Activated CD4-positive, alpha-beta memory T cell treated with anti-CD3 and anti-CD28 coated beads, Interleukin-2, amount 10 ng/mL, durations not matched to agents 7 days and 5 days (primary cell): ENCODE measurements at regions of chr11 and their contacts with region 1.

Region 1: GRCh38 chr11:2002807-2003206 is 5.2 kb upstream of the H19 start:
- DNase-seq: no peak
- H3K4me3 Mint-ChIP-seq: no peak overlapping the region
- H3K27ac Mint-ChIP-seq: no peak overlapping the region
- H3K4me1 Mint-ChIP-seq: no peaks in the 10 kb centered on the region
- H3K27me3 Mint-ChIP-seq: no peaks in the 10 kb centered on the region

Region 2: GRCh38 chr11:1652771-1653540 is 349.9 kb before region 1 on chr11:
- CTCF ChIA-PET with region 1: interaction called, 24 read pairs
- POLR2A ChIA-PET with region 1: no interaction called
- DNase-seq: peak; percentile 77
- H3K4me3 Mint-ChIP-seq: no peak overlapping the region
- H3K27ac Mint-ChIP-seq: no peak overlapping the region
- H3K4me1 Mint-ChIP-seq: no peaks in the 10 kb centered on the region
- H3K27me3 Mint-ChIP-seq: peaks cover 13% of the 10 kb centered on the region

Region 3: GRCh38 chr11:1832211-1832919 is 170.4 kb before region 1 on chr11:
- CTCF ChIA-PET with region 1: interaction called, 34 read pairs
- POLR2A ChIA-PET with region 1: interaction called, 3 read pairs
- DNase-seq: peak; percentile 65
- H3K4me3 Mint-ChIP-seq: no peak overlapping the region
- H3K27ac Mint-ChIP-seq: no peak overlapping the region
- H3K4me1 Mint-ChIP-seq: no peaks in the 10 kb centered on the region
- H3K27me3 Mint-ChIP-seq: peaks cover 5% of the 10 kb centered on the region

Region 4: DNA sequence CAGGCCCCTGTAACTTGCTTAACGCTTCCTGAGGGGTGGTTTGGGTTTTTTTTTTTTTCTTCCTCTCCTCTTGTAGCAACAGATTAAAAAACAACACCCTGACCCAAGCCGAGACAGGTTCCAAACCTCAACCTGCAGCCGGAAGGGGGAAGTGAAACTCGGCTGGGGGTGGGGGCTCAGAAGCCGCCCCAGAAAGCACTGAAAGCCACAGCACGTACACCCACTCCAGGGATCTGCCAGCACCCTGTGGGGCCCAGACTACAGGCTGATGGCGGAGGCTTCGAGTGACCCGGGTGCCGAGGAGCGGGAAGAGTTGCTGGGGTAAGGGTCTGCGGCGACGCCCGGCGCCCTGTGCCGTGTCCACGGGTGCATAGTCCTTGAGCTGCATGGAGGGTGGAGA is 149.9 kb before region 1 on chr11 and contains the start of gene LSP1:
- CTCF ChIA-PET with region 1: interaction called, 12 read pairs
- POLR2A ChIA-PET with region 1: no interaction called
- DNase-seq: peak; percentile 92
- H3K4me3 Mint-ChIP-seq: peak within 1 kb of the TSS; percentile 97
- H3K27ac Mint-ChIP-seq: peak within 1 kb of the TSS; percentile 97
- H3K4me1 Mint-ChIP-seq: peaks cover 63% of the 10 kb centered on the region
- H3K27me3 Mint-ChIP-seq: peaks cover 2% of the 10 kb centered on the region
- total RNA-seq, gene LSP1: 590 TPM

Region 5: DNA sequence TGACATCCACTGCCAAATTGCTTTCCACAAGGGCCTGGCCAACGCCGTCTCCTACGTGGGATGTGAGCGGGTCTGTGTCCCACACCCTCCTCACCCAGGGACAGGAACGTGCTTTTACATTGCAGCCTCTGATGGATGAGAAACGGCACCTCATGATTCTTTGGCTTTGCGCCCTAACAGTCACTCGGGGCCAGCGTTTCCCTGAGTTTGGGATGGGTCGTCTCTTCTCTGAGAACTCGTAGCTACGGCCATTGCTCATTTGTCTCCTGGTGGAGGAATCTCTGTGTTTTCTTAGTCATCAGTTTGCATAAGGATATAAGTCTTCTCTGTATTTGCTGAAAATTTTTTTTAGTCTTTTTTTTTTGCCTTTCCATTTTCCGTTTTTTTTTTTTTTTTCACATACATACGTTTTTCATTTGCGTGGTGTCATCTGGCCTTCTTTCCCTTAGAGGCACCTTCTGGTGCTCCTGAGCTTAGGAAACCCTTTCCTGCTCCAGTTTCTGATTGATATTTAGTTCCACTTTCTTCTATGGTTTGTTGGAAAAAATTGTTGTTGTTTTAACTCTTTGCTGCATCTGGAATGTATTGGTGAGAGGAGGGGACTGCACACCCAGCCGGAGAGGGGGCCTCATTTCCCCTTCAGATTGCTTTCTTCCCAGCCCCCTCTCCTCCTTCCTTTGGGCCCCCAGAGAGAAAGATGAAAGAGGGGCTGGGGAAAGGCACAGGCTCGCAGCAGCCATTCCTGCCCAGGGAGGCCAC is 71.3 kb before region 1 on chr11:
- CTCF ChIA-PET with region 1: no interaction called
- POLR2A ChIA-PET with region 1: no interaction called
- DNase-seq: no peak
- H3K4me3 Mint-ChIP-seq: no peak overlapping the region
- H3K27ac Mint-ChIP-seq: no peak overlapping the region
- H3K4me1 Mint-ChIP-seq: no peaks in the 10 kb centered on the region
- H3K27me3 Mint-ChIP-seq: peaks cover 19% of the 10 kb centered on the region

Region 6: DNA sequence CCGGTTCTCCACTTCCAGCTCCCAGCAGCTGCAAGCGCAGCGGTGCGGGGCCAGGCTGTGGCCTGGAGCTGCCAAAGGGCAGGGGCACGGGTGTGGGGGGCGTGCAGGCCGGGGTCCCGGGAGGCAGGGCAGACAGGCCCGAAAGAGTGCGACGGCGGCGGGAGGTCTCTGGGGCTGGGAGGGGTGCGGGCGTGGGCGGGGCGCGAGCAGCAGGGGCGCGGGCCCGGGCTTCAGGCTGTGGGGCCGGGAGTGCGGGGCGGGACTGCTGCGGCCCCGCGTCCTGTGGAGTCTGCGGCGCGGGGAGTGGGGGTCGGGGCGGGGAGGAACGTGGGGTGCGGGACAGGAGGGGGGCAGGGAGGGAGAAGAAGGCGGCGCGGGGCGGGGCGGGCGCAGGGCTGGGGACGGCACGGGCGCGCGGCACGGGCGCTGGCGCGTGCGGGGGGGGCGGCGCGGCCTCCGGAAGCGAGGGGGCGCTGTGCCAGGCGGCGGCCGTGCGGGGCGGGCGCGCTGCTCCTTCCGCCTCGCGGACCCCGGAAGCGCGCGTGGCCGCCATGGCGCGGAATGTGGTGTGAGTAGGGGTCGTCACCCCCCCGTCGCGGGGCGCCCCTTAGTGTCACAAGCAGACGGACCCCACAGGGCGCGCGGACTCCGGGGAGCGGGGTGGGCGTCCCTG is 55.9 kb before region 1 on chr11 and contains the start of gene MRPL23:
- CTCF ChIA-PET with region 1: interaction called, 19 read pairs
- POLR2A ChIA-PET with region 1: no interaction called
- DNase-seq: peak; percentile 18
- H3K4me3 Mint-ChIP-seq: no peak within 1 kb of the TSS
- H3K27ac Mint-ChIP-seq: no peak within 1 kb of the TSS
- H3K4me1 Mint-ChIP-seq: no peaks in the 10 kb centered on the region
- H3K27me3 Mint-ChIP-seq: no peaks in the 10 kb centered on the region
- total RNA-seq, gene MRPL23: 99.8 to 99.9 TPM